CD14-positive monocyte (primary cell): ENCODE measurements at regions of chr1 and their contacts with region 1.

Region 1: GRCh38 chr1:235527196-235527814 is 23.1 kb upstream of the B3GALNT2 start:
- DNase-seq: no peak
- H3K4me3 ChIP-seq: no peak overlapping the region
- H3K4me3 Mint-ChIP-seq: no peak overlapping the region
- H3K27ac ChIP-seq: no peak overlapping the region
- H3K27ac Mint-ChIP-seq: no peak overlapping the region
- H3K4me1 ChIP-seq: no peaks in the 10 kb centered on the region
- H3K4me1 Mint-ChIP-seq: peaks cover 2% of the 10 kb centered on the region
- H3K27me3 ChIP-seq: no peaks in the 10 kb centered on the region
- H3K27me3 Mint-ChIP-seq: no peaks in the 10 kb centered on the region
- CTCF ChIP-seq: no peak

Region 2: GRCh38 chr1:235460770-235461169 is 66.5 kb before region 1 on chr1:
- intact Hi-C with region 1: no loop called
- DNase-seq: peak in 1 of 3 donors; percentile 54
- H3K4me3 ChIP-seq: no peak overlapping the region
- H3K4me3 Mint-ChIP-seq: no peak overlapping the region
- H3K27ac ChIP-seq: no peak overlapping the region
- H3K27ac Mint-ChIP-seq: peak overlapping the region in 3 of 7 donors; percentile 54 to 73 (median 64)
- H3K4me1 ChIP-seq: no peaks in the 10 kb centered on the region
- H3K4me1 Mint-ChIP-seq: no peaks in the 10 kb centered on the region
- H3K27me3 ChIP-seq: no peaks in the 10 kb centered on the region
- H3K27me3 Mint-ChIP-seq: no peaks in the 10 kb centered on the region
- CTCF ChIP-seq: no peak

Region 3: GRCh38 chr1:235617808-235618207 is 90.5 kb after region 1 on chr1:
- intact Hi-C with region 1: loop called in 1 of 2 experiments (anchors 10 kb)
- DNase-seq: no peak
- H3K4me3 ChIP-seq: no peak overlapping the region
- H3K4me3 Mint-ChIP-seq: no peak overlapping the region
- H3K27ac ChIP-seq: no peak overlapping the region
- H3K27ac Mint-ChIP-seq: no peak overlapping the region
- H3K4me1 ChIP-seq: no peaks in the 10 kb centered on the region
- H3K4me1 Mint-ChIP-seq: no peaks in the 10 kb centered on the region
- H3K27me3 ChIP-seq: no peaks in the 10 kb centered on the region
- H3K27me3 Mint-ChIP-seq: peaks cover 3 to 7% (median 3%) of the 10 kb centered on the region in 3 donors
- CTCF ChIP-seq: no peak

Region 4: DNA sequence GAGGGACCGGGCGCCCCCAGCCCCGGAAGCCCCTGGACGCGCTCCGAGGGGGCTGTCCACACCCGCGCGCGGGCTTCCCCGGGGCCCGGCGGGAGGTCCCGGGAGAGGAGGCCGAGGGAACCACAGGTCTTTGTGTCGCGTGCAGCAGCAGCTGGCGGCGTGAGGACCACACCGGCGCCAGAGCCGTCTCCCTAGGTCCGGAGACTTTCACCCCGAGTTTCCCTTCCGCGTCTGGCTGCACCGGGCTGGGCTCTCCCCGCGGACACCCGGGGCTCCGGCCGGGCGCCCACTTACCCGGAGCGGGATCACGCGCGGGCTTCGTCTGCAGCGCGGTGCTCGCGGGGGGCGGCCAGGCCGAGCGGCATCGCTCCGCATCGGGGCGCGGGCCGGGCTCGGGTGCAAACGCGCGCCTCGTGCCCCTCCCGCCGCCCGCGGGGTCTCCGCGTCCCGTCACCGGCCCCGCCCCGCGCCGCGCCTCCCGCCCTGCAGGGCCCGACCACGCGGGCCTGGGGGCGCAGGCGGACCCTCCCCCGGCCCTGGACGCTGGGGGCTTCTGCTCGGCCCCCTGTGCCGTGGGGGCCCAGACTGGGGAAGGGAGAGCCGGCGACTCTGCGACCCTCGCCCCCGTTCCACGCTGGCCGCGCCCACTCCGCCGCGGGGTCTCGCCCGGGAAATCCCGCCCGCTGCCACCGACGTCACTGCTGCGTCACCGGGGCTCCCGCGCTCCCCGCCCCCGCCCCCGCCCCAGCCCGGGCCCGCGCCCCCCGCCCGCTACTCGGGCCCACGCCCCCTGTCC is 122.3 kb after region 1 on chr1 and contains the start of gene GNG4:
- intact Hi-C with region 1: loop called in 1 of 2 experiments (anchors 10 kb)
- DNase-seq: peak; percentile 10 to 52 (median 32)
- H3K4me3 ChIP-seq: peak within 1 kb of the TSS in 2 of 3 experiments; percentile 36 to 70
- H3K4me3 Mint-ChIP-seq: peak within 1 kb of the TSS; percentile 83 to 97
- H3K27ac ChIP-seq: no peak within 1 kb of the TSS
- H3K27ac Mint-ChIP-seq: peak within 1 kb of the TSS in 4 of 7 donors; percentile 32 to 83 (median 52)
- H3K4me1 ChIP-seq: peaks cover 22 to 23% of the 10 kb centered on the region in 2 donors
- H3K4me1 Mint-ChIP-seq: peaks cover 19% of the 10 kb centered on the region
- H3K27me3 ChIP-seq: peaks cover 57 to 84% of the 10 kb centered on the region in 2 donors
- H3K27me3 Mint-ChIP-seq: peaks cover 77 to 86% (median 85%) of the 10 kb centered on the region in 3 donors
- CTCF ChIP-seq: no peak
- polyA plus RNA-seq, gene GNG4: not detected